ENCODE measurements at regions of chr16 and their contacts with region 1.

Region 1: GRCh38 chr16:11768849-11769248 is 26.2 kb upstream of the TXNDC11 start:
- DNase-seq: no peak
- ATAC-seq: no peak
- H3K4me3 Mint-ChIP-seq: no peak overlapping the region
- H3K27ac Mint-ChIP-seq: peak overlapping the region; percentile 22
- H3K4me1 Mint-ChIP-seq: peaks cover 6% of the 10 kb centered on the region
- H3K27me3 Mint-ChIP-seq: no peaks in the 10 kb centered on the region

Region 2: GRCh38 chr16:11783319-11784037 is 14.6 kb after region 1 on chr16:
- CTCF ChIA-PET with region 1: interaction called, 14 read pairs
- POLR2A ChIA-PET with region 1: interaction called, 4 read pairs
- DNase-seq: peak; percentile 61
- ATAC-seq: peak; percentile 81
- H3K4me3 Mint-ChIP-seq: peak overlapping the region; percentile 65
- H3K27ac Mint-ChIP-seq: peak overlapping the region; percentile 91
- H3K4me1 Mint-ChIP-seq: peaks cover 59% of the 10 kb centered on the region
- H3K27me3 Mint-ChIP-seq: no peaks in the 10 kb centered on the region

Measured in activated CD8-positive, alpha-beta T cell treated with anti-CD3 and anti-CD28 coated beads, Interleukin-2, amount 10 ng/mL, durations not matched to agents 7 days and 5 days (primary cell).